Breast epithelium (tissue), 4 donors: ENCODE measurements at regions of chr2 and their contacts with region 1.

Region 1: GRCh38 chr2:184141866-184142265 is 456.5 kb upstream of the ZNF804A start:
- DNase-seq: no peak
- H3K4me3 ChIP-seq: no peak overlapping the region
- H3K27ac ChIP-seq: no peak overlapping the region
- H3K4me1 ChIP-seq: no peaks in the 10 kb centered on the region
- H3K27me3 ChIP-seq: no peaks in the 10 kb centered on the region
- CTCF ChIP-seq: no peak
- POLR2A ChIP-seq: no peak

Region 2: GRCh38 chr2:182962641-182963040 is 1179.2 kb before region 1 on chr2:
- intact Hi-C with region 1: no loop called
- DNase-seq: no peak
- H3K4me3 ChIP-seq: no peak overlapping the region
- H3K27ac ChIP-seq: no peak overlapping the region
- H3K4me1 ChIP-seq: no peaks in the 10 kb centered on the region
- H3K27me3 ChIP-seq: no peaks in the 10 kb centered on the region
- CTCF ChIP-seq: no peak
- POLR2A ChIP-seq: no peak

Region 3: DNA sequence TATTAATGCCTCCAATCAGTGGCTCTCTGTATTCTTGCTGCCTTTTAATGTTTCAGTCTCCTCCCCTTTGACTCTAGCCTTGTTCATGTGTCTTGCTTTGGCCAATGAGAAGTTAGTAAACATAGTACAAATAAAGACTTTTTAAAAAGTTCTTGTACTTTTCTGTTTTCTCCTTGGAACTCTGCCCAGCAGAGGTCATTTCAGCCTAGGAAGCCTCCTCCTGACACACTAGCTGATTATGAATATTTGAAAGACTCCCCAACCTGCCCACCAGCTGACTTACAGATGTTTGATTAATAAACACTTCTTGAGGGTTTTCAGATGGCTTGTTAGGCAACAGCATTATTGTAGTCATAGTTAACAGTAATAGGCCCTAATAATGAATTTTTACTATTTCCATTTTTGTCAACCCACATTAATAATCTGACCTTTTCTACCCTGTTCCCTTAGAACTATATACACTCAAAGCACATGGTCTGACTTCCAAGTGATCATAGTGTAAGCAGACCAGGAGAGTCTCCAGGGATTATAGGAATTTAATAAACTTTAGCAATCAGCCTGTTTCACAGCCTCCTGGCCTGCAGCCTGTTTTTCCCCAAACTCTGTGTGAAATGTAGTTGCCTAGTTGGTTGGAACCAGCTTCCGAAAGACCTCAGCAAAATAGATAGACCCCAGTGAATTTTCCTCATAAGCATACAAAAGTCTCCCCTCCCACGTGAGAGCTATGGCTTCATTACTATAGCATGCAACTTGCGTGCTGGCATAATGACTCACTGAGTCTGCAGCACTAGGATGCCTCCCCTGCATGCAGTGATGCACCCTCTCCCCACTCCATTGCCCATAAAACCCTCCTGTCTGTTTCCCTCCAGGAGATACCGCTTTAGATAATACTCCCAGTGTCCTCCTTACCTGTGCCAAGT is 214.2 kb before region 1 on chr2:
- intact Hi-C with region 1: no loop called
- DNase-seq: no peak
- H3K4me3 ChIP-seq: no peak overlapping the region
- H3K27ac ChIP-seq: peak overlapping the region in 1 of 2 donors; percentile 19
- H3K4me1 ChIP-seq: no peaks in the 10 kb centered on the region
- H3K27me3 ChIP-seq: no peaks in the 10 kb centered on the region
- CTCF ChIP-seq: no peak
- POLR2A ChIP-seq: no peak

Region 4: GRCh38 chr2:184091456-184091855 is 50.4 kb before region 1 on chr2:
- intact Hi-C with region 1: loop called (anchors 2 kb)
- DNase-seq: no peak
- H3K4me3 ChIP-seq: no peak overlapping the region
- H3K27ac ChIP-seq: no peak overlapping the region
- H3K4me1 ChIP-seq: no peaks in the 10 kb centered on the region
- H3K27me3 ChIP-seq: no peaks in the 10 kb centered on the region
- CTCF ChIP-seq: no peak
- POLR2A ChIP-seq: no peak

Region 5: DNA sequence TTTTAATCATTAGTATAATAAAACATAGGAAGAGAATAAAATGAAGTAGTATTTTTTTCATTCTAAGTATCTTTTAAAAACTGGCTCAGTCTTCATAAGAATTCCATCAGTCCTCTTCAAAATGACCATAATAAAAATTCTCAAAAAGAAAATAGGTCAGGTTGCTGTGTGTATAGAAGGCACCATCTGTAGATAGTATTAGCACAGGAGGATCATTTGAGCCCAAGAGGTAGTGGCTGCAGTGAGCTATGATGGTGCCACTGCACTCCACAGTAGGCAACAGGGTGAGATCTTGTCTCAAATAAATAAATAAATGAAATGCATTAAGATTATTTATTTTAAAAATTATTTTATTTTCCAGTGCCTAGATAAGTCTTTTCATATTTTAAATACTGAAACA is 932.3 kb after region 1 on chr2:
- intact Hi-C with region 1: no loop called
- DNase-seq: no peak
- H3K4me3 ChIP-seq: no peak overlapping the region
- H3K27ac ChIP-seq: no peak overlapping the region
- H3K4me1 ChIP-seq: no peaks in the 10 kb centered on the region
- H3K27me3 ChIP-seq: no peaks in the 10 kb centered on the region
- CTCF ChIP-seq: no peak
- POLR2A ChIP-seq: no peak